Activated CD4-positive, alpha-beta T cell treated with anti-CD3 and anti-CD28 coated beads for 36 hours (primary cell): ENCODE measurements at regions of chr2 and their contacts with region 1.

Region 1: GRCh38 chr2:145744541-145745386 is 1224.8 kb upstream of the ZEB2 start:
- DNase-seq: no peak
- ATAC-seq: peak; percentile 80
- H3K4me3 Mint-ChIP-seq: no peak overlapping the region
- H3K27ac Mint-ChIP-seq: no peak overlapping the region
- H3K4me1 Mint-ChIP-seq: peaks cover 24% of the 10 kb centered on the region
- H3K27me3 Mint-ChIP-seq: peaks cover 6% of the 10 kb centered on the region

Region 2: DNA sequence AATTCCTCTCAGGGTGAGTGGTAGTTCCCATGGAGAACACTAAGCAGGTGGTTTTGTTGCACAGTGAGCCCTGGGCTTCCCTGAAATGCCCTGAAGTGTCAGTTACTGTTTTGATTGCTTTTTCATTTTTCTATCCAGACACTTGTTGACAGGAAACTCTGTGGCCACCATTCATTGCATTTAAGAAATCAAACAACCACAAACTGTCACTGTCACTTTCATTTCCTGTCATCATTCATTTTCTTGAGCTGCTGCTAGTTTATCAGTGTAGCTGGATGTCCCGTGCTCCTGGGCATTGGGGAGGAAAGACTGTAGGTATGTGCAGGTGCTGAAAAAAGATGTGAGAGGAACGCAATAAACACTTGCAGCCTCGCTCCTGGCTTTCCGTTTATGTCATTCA is 333.3 kb before region 1 on chr2:
- CTCF ChIA-PET with region 1: no interaction called
- POLR2A ChIA-PET with region 1: no interaction called
- intact Hi-C with region 1: loop called in 1 of 2 experiments (anchors 10 kb)
- DNase-seq: peak; percentile 25
- ATAC-seq: peak; percentile 86
- H3K4me3 Mint-ChIP-seq: no peak overlapping the region
- H3K27ac Mint-ChIP-seq: no peak overlapping the region
- H3K4me1 Mint-ChIP-seq: peaks cover 13% of the 10 kb centered on the region
- H3K27me3 Mint-ChIP-seq: peaks cover 16% of the 10 kb centered on the region